Caco-2 (cell line): ENCODE measurements at regions of chr14 and their contacts with region 1.

Region 1: DNA sequence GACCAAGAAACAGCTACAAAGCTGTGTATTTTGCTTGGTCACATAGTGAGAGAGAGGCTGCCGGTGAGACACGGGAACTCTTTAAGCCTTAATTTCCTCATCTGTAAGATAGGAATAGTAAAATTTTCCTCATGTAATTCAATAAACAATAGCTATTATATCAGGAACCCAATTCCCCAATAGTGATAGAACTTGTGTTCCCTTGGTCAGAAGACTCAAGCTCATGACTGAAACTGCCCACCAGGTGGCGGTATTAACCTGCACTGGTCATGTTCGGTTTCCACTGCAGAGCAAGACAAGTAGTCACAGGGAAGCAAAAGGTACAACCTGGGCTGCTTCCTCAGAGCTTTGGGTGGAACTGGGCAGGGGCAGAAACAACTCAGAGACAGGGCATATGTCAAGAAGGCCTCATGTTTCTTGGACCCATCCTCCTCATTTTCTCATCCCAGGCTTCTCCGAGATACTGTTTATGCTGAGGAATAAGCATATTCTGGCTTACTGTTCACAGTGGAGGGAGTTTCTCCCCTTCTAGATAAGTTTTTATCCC is 4.2 kb upstream of the AJUBA start:
- DNase-seq: peak; percentile 86 to 87
- H3K4me3 ChIP-seq: no peak overlapping the region
- H3K4me3 Mint-ChIP-seq: no peak overlapping the region
- H3K27ac Mint-ChIP-seq: no peak overlapping the region
- H3K4me1 ChIP-seq: peaks cover 11% of the 10 kb centered on the region
- H3K4me1 Mint-ChIP-seq: no peaks in the 10 kb centered on the region
- H3K27me3 ChIP-seq: no peaks in the 10 kb centered on the region
- H3K27me3 Mint-ChIP-seq: no peaks in the 10 kb centered on the region
- CTCF ChIP-seq: peak; percentile 80 to 91

Region 2: DNA sequence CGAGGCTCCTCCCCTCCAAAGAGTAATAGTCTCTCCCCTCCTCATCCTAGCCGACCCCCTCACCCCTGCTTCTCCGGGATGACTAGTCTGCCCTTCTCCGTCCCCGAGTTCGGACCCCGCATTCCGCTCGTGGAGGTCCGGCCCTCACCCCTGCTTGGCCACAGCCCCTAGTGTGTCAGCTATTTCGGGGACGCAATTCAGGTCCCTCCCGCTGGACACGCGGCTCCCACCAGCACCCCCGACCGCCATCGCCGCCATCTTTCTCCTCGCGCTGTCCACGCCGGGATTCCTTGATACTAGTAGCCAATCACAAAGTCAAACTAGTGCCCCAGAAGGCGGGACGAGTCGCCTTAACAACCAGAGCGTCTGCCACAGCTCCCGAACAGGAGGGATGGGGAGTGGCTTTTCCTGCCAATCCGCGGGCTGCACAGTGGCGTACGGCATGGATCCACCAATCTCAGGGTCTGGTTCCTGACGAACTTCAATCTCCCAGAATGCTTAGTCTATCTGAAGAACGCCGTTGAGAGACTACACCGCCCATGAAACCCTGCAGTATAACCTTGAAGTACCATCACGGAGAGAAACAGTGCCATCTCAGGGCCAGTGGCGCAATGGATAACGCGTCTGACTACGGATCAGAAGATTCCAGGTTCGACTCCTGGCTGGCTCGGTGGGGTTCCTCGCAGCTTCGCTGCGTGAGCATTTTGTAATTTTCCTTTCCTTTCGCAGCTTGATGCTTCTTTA is 57.3 kb before region 1 on chr14 and contains the start of gene PRMT5:
- CTCF ChIA-PET with region 1: interaction called, 11 read pairs
- POLR2A ChIA-PET with region 1: interaction called, 4 read pairs
- intact Hi-C with region 1: no loop called
- DNase-seq: peak; percentile 98 to 100
- H3K4me3 ChIP-seq: peak within 1 kb of the TSS; percentile 89
- H3K4me3 Mint-ChIP-seq: no peak within 1 kb of the TSS
- H3K27ac Mint-ChIP-seq: no peak within 1 kb of the TSS
- H3K4me1 ChIP-seq: peaks cover 14% of the 10 kb centered on the region; the same call in 1 of the 2 replicates
- H3K4me1 Mint-ChIP-seq: peaks cover 26% of the 10 kb centered on the region
- H3K27me3 ChIP-seq: no peaks in the 10 kb centered on the region
- H3K27me3 Mint-ChIP-seq: no peaks in the 10 kb centered on the region
- CTCF ChIP-seq: no peak
- total RNA-seq, gene PRMT5: 107 and 111 TPM in 2 replicates

Region 3: GRCh38 chr14:22973217-22974032 is 13.2 kb before region 1 on chr14:
- CTCF ChIA-PET with region 1: interaction called, 68 read pairs
- POLR2A ChIA-PET with region 1: interaction called, 35 read pairs
- intact Hi-C with region 1: loop called (anchors 1 kb)
- DNase-seq: peak; percentile 58 to 76
- H3K4me3 ChIP-seq: no peak overlapping the region
- H3K4me3 Mint-ChIP-seq: peak overlapping the region; percentile 27
- H3K27ac Mint-ChIP-seq: peak overlapping the region; percentile 84
- H3K4me1 ChIP-seq: peaks cover 49% of the 10 kb centered on the region
- H3K4me1 Mint-ChIP-seq: peaks cover 45% of the 10 kb centered on the region
- H3K27me3 ChIP-seq: no peaks in the 10 kb centered on the region
- H3K27me3 Mint-ChIP-seq: no peaks in the 10 kb centered on the region
- CTCF ChIP-seq: peak; percentile 70 to 71

Region 4: DNA sequence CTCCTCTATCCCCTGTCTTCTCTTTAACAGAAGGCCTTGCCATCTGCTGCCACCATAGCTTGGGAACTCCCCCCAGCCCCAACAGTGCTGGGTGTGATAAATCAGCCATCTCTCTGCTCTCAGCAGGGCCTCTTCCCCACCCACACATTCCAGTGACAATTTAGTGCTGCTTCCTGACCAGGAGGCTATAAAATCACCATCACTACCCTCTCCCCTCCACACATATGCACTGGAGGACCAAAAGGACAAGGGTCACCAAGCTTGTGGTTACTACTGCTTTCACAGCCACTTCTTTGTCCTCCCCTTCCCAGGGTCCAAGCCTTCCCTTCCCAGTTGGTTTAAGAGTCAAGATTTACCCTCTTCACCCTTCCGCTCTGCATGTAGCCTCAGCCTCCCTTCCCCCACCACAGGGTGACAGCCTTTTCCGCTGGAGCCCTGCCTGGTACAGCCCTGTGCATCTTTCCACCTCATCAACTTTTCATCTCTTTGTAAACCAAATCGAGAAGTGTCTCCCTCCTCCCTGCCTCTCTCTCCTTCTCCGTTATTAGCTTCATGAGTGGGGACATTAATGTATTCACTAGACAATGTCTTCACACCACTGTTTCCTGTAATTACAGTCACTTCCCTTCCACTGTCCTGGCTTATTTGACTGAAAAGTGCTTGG is 38.7 kb after region 1 on chr14:
- CTCF ChIA-PET with region 1: no interaction called
- POLR2A ChIA-PET with region 1: no interaction called
- intact Hi-C with region 1: no loop called
- DNase-seq: peak; percentile 19 to 69
- H3K4me3 ChIP-seq: no peak overlapping the region
- H3K4me3 Mint-ChIP-seq: peak overlapping the region; percentile 27
- H3K27ac Mint-ChIP-seq: peak overlapping the region; percentile 60
- H3K4me1 ChIP-seq: peaks cover 16% of the 10 kb centered on the region
- H3K4me1 Mint-ChIP-seq: peaks cover 14% of the 10 kb centered on the region
- H3K27me3 ChIP-seq: no peaks in the 10 kb centered on the region
- H3K27me3 Mint-ChIP-seq: no peaks in the 10 kb centered on the region
- CTCF ChIP-seq: no peak

Region 5: GRCh38 chr14:23052182-23052623 is 65.6 kb after region 1 on chr14:
- CTCF ChIA-PET with region 1: interaction called, 102 read pairs
- POLR2A ChIA-PET with region 1: no interaction called
- intact Hi-C with region 1: no loop called
- DNase-seq: no peak
- H3K4me3 ChIP-seq: no peak overlapping the region
- H3K4me3 Mint-ChIP-seq: no peak overlapping the region
- H3K27ac Mint-ChIP-seq: no peak overlapping the region
- H3K4me1 ChIP-seq: peaks cover 7% of the 10 kb centered on the region
- H3K4me1 Mint-ChIP-seq: peaks cover 15% of the 10 kb centered on the region
- H3K27me3 ChIP-seq: no peaks in the 10 kb centered on the region
- H3K27me3 Mint-ChIP-seq: no peaks in the 10 kb centered on the region
- CTCF ChIP-seq: peak in 1 of 2 experiments; percentile 32

Region 6: GRCh38 chr14:23068476-23069412 is 82.2 kb after region 1 on chr14:
- CTCF ChIA-PET with region 1: interaction called, 26 read pairs
- POLR2A ChIA-PET with region 1: no interaction called
- intact Hi-C with region 1: no loop called
- DNase-seq: peak; percentile 89
- H3K4me3 ChIP-seq: no peak overlapping the region
- H3K4me3 Mint-ChIP-seq: peak overlapping the region; percentile 42
- H3K27ac Mint-ChIP-seq: peak overlapping the region; percentile 60
- H3K4me1 ChIP-seq: peaks cover 13% of the 10 kb centered on the region
- H3K4me1 Mint-ChIP-seq: peaks cover 32% of the 10 kb centered on the region
- H3K27me3 ChIP-seq: no peaks in the 10 kb centered on the region
- H3K27me3 Mint-ChIP-seq: no peaks in the 10 kb centered on the region
- CTCF ChIP-seq: peak; percentile 95 to 98

Region 7: DNA sequence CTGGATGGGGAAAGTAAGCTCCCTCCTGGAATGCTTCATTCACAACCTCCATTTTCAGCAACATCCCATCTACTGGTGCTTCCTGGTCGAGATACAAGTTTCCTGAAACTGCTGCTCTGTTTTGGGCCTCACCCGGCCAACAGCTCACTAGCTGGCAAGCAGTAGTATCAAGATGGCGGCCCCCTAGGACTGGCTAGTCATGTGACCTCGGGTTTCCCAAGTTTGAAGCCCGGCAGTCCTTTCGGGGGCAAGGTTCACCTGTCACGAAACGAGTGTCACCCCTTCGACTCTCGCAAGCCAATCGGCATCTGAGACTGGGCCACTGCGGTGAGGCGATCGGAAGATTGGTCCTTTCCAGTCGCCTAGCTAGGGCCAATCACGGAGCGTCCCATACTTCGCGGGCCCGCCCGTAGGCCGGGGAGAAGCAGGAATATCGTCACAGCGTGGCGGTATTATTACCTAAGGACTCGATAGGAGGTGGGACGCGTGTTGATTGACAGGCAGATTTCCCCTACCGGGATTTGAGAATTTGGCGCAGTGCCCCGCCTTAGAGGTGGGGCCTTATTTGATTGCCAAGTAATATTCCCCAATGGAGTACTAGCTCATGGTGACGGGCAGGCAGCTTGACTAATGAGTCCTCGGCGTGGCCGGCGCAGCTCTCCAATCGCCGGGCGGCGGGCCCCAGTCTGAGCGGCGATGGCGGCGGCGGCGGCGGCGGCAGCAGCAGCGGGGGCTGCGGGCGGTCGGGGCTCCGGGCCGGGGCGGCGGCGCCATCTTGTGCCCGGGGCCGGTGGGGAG is 334.4 kb after region 1 on chr14 and contains the start of gene PABPN1:
- CTCF ChIA-PET with region 1: no interaction called
- POLR2A ChIA-PET with region 1: interaction called, 12 read pairs
- intact Hi-C with region 1: no loop called
- DNase-seq: peak; percentile 98 to 99
- H3K4me3 ChIP-seq: peak within 1 kb of the TSS; percentile 94
- H3K4me3 Mint-ChIP-seq: peak within 1 kb of the TSS; percentile 96
- H3K27ac Mint-ChIP-seq: peak within 1 kb of the TSS; percentile 96
- H3K4me1 ChIP-seq: peaks cover 10% of the 10 kb centered on the region
- H3K4me1 Mint-ChIP-seq: peaks cover 17% of the 10 kb centered on the region
- H3K27me3 ChIP-seq: no peaks in the 10 kb centered on the region
- H3K27me3 Mint-ChIP-seq: no peaks in the 10 kb centered on the region
- CTCF ChIP-seq: no peak
- total RNA-seq, gene PABPN1: 196 and 202 TPM in 2 replicates